ENCODE measurements at regions of chr7 and their contacts with region 1.

Region 1: GRCh38 chr7:18666107-18666728 is 170.7 kb downstream of the HDAC9 start:
- DNase-seq: peak; percentile 81
- ATAC-seq: peak; percentile 91

Region 2: DNA sequence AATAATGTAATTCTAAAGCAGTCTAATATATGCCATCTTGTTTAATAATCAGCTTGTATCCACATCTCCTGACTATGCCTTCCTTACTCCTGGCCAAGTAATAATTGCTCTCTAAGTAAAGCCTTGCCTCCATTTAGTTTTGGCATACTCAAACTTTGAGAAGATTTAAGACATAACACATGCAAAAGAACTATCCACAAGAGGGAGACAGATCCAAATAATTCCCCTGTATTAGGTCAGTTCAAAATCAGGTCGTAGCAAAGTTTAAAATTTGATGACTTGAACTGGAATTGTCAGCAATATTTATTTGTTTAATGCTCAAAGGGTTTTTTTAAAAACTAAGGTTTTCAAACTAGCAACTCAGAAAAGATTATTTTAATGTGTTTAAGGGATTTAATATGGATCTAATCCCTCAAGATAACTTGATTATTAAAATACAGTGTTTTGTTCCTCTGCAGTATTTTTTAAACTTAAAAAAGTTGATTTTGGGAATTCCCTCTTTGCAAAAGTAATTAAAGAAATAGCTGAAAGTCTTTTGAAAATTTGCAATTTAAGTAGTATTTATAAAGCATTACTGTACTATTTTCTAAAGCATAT is 75.4 kb before region 1 on chr7:
- intact Hi-C with region 1: loop called in 1 of 2 experiments (anchors 5 kb)
- DNase-seq: no peak
- ATAC-seq: peak in 1 of 2 donors; percentile 66

Region 3: GRCh38 chr7:18829858-18830285 is 163.7 kb after region 1 on chr7:
- intact Hi-C with region 1: no loop called
- DNase-seq: no peak
- ATAC-seq: peak in 1 of 2 donors; percentile 74

Region 4: GRCh38 chr7:19305698-19306097 is 639.5 kb after region 1 on chr7:
- intact Hi-C with region 1: no loop called
- DNase-seq: no peak
- ATAC-seq: no peak

Measured in left cardiac atrium (tissue), 4 donors.